Mammary epithelial cell (primary cell): ENCODE measurements at regions of chr4 and their contacts with region 1.

Region 1: GRCh38 chr4:17544205-17544604 is 29.2 kb downstream of the CLRN2 start:
- DNase-seq: no peak
- H3K4me3 ChIP-seq: no peak overlapping the region
- H3K27ac ChIP-seq: no peak overlapping the region
- H3K4me1 ChIP-seq: no peaks in the 10 kb centered on the region
- H3K27me3 ChIP-seq: no peaks in the 10 kb centered on the region
- CTCF ChIP-seq: no peak

Region 2: GRCh38 chr4:17576932-17577665 is 32.9 kb after region 1 on chr4 and contains the start of gene LAP3:
- CTCF ChIA-PET with region 1: interaction called, 3 read pairs
- dilution Hi-C with region 1: no loop called
- in situ Hi-C with region 1: no loop called
- intact Hi-C with region 1: loop called (anchors 1 kb)
- DNase-seq: peak; percentile 95
- H3K4me3 ChIP-seq: peak within 1 kb of the TSS; percentile 72 to 84 (median 72)
- H3K27ac ChIP-seq: peak within 1 kb of the TSS; percentile 89
- H3K4me1 ChIP-seq: peaks cover 6% of the 10 kb centered on the region
- H3K27me3 ChIP-seq: no peaks in the 10 kb centered on the region
- CTCF ChIP-seq: no peak
- total RNA-seq, gene LAP3: 36.1 to 69.5 TPM

Region 3: GRCh38 chr4:17614416-17615299 is 70.5 kb after region 1 on chr4 and contains the start of gene MED28:
- CTCF ChIA-PET with region 1: no interaction called
- dilution Hi-C with region 1: no loop called
- in situ Hi-C with region 1: no loop called
- intact Hi-C with region 1: no loop called
- DNase-seq: peak; percentile 89
- H3K4me3 ChIP-seq: peak within 1 kb of the TSS; percentile 59 to 93 (median 78)
- H3K27ac ChIP-seq: peak within 1 kb of the TSS; percentile 86
- H3K4me1 ChIP-seq: peaks cover 12% of the 10 kb centered on the region
- H3K27me3 ChIP-seq: no peaks in the 10 kb centered on the region
- CTCF ChIP-seq: no peak
- total RNA-seq, gene MED28: 10.7 to 30.8 TPM

Region 4: DNA sequence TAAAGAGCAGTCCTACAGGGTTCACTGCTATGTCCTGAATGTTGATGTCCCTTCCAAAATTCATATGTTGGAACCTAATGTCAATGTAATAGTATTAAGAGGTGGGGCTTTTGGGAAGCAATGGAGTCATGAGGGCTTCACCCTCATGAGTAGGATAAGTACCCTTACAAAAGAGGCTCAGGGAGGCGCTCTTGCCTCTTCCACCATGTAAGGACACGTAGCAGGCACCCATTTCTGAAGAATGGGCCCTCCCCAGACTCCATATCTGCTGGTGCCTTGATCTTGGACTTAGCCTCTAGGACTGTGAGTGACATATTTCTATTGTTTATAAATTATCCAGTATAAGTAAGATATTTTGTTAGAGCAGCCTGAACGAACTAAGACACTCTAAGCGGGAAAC is 86.0 kb after region 1 on chr4:
- CTCF ChIA-PET with region 1: no interaction called
- dilution Hi-C with region 1: no loop called
- in situ Hi-C with region 1: loop called in 1 of 2 experiments (anchors 5 kb)
- intact Hi-C with region 1: no loop called
- DNase-seq: no peak
- H3K4me3 ChIP-seq: no peak overlapping the region
- H3K27ac ChIP-seq: no peak overlapping the region
- H3K4me1 ChIP-seq: no peaks in the 10 kb centered on the region
- H3K27me3 ChIP-seq: no peaks in the 10 kb centered on the region
- CTCF ChIP-seq: no peak

Region 5: DNA sequence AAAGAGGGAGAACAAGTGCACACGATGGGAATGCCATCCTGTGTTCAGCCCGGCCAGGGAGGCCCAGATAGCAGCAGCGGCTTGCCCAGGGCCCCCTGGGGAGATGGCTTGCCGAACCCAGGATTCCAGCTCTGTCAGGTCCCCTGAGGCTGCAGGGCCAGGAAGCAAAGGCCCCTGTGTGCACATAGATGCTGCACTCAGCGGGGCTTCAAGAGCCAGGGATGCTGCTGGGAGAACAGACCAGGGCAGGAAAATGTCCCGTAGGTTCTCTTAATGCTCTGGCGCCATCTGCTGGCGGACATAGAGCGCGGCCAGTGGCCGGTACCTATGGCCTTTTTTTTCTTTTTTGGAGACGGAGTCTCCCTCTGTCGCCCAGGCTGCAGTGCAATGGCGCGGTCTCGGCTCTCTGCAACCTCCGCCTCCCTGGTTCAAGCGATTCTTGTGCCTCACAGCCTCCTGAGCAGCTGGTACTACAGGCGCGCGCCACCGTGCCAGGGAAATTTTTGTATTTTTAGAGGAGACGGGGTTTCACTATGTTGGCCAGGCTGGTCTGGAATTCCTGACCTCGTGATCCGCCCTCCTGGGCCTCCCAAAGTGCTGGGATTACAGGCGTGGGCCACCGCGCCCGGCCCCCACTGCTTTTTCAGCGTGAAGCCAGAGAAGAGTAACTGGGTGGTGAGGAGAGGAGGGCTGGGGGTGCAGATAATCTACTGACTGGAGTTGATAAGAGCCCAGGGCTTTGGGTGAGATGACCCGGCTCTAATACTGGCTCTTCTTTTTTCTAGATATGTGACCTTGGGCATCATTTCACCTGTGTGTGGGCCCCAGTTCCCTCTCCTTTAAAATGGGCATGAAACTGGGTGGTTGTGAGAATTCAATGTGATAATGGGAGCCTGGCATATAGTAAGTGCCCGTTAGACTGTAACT is 92.8 kb after region 1 on chr4:
- CTCF ChIA-PET with region 1: interaction called, 3 read pairs
- dilution Hi-C with region 1: no loop called
- in situ Hi-C with region 1: loop called in 1 of 2 experiments (anchors 5 kb)
- intact Hi-C with region 1: loop called (anchors 1 kb)
- DNase-seq: peak; percentile 54
- H3K4me3 ChIP-seq: no peak overlapping the region
- H3K27ac ChIP-seq: no peak overlapping the region
- H3K4me1 ChIP-seq: no peaks in the 10 kb centered on the region
- H3K27me3 ChIP-seq: no peaks in the 10 kb centered on the region
- CTCF ChIP-seq: peak; percentile 74 to 89

Region 6: GRCh38 chr4:17810260-17811077 is 266.3 kb after region 1 on chr4 and contains the starts of genes DCAF16 and NCAPG:
- CTCF ChIA-PET with region 1: no interaction called
- dilution Hi-C with region 1: no loop called
- in situ Hi-C with region 1: loop called in 1 of 2 experiments (anchors 10 kb)
- intact Hi-C with region 1: loop called (anchors 1 kb)
- DNase-seq: peak; percentile 99
- H3K4me3 ChIP-seq: peak within 1 kb of the TSS; percentile 82 to 90 (median 83)
- H3K27ac ChIP-seq: peak within 1 kb of the TSS; percentile 91
- H3K4me1 ChIP-seq: peaks cover 21% of the 10 kb centered on the region
- H3K27me3 ChIP-seq: no peaks in the 10 kb centered on the region
- CTCF ChIP-seq: no peak
- total RNA-seq, gene DCAF16: 28.5 to 32.7 TPM
- total RNA-seq, gene NCAPG: 2.0 to 39.4 TPM

Region 7: GRCh38 chr4:18366892-18367291 is 822.7 kb after region 1 on chr4:
- CTCF ChIA-PET with region 1: no interaction called
- dilution Hi-C with region 1: no loop called
- in situ Hi-C with region 1: no loop called
- intact Hi-C with region 1: loop called (anchors 2 kb)
- DNase-seq: peak; percentile 17
- H3K4me3 ChIP-seq: no peak overlapping the region
- H3K27ac ChIP-seq: no peak overlapping the region
- H3K4me1 ChIP-seq: no peaks in the 10 kb centered on the region
- H3K27me3 ChIP-seq: no peaks in the 10 kb centered on the region
- CTCF ChIP-seq: peak; percentile 58 to 64